ENCODE measurements at regions of chr7 and their contacts with region 1.

Region 1: GRCh38 chr7:105905910-105906568 is 29.6 kb upstream of the ATXN7L1 start:
- DNase-seq: no peak
- H3K4me3 ChIP-seq: no peak overlapping the region
- CTCF ChIP-seq: no peak

Region 2: GRCh38 chr7:105876091-105876963 is 29.7 kb before region 1 on chr7 and contains the start of gene ATXN7L1:
- CTCF ChIA-PET with region 1: interaction called, 11 read pairs
- POLR2A ChIA-PET with region 1: no interaction called
- DNase-seq: peak; percentile 77
- H3K4me3 ChIP-seq: peak within 1 kb of the TSS; percentile 76
- CTCF ChIP-seq: peak; percentile 36